ENCODE measurements at regions of chr10 and their contacts with region 1.

Region 1: DNA sequence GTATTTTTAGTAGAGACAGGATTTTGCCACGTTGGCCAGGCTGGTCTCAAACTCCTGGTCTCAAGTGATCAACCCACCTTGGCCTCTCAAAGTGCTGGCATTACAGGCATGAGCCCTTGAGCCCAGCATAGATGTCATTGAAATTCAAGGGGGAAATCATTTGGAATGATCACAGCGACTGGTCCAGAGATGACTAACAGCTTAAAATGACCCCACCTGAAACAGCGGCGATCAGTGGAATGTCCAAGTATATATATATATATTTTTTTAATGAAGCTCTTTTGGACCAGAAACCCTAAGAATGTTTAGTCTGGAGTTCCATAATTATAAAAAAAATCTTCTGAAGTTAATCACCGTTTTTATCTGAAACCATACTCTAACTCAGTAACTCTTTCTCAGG is 12.5 kb upstream of the AKR1E2 start:
- DNase-seq: no peak
- H3K27ac ChIP-seq: no peak overlapping the region
- CTCF ChIP-seq: no peak

Region 2: GRCh38 chr10:5434017-5434753 is 620.7 kb after region 1 on chr10:
- CTCF ChIA-PET with region 1: interaction called, 19 read pairs
- POLR2A ChIA-PET with region 1: no interaction called
- DNase-seq: no peak
- H3K27ac ChIP-seq: no peak overlapping the region
- CTCF ChIP-seq: peak; percentile 71

Measured in RWPE1 (cell line).